Ascending aorta (tissue), 2 donors: ENCODE measurements at regions of chr10 and their contacts with region 1.

Region 1: DNA sequence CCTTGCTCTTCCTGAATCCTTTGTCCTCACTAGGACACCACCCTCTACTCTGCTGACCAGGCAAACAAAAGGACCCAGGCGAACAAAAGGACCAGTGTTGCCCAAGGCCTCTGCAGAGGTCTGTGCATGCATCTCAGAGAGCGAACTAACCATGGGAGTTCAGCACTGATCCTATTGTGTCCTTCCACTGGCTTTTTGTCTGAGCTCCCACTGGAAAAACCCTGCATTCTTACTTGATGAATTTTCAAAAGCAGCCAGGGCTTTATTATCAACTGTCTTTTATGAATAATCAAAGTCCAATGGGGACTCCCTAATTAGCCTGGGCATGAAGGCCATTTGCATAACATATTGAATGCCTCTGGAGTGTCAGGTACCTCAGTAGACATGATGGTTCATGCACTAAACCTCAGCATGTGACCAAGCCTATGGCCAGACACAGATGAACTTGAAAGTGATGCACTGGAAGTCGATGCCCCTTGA is 140.6 kb downstream of the KCNMA1 start:
- DNase-seq: no peak
- H3K4me3 ChIP-seq: no peak overlapping the region
- H3K27ac ChIP-seq: no peak overlapping the region
- H3K4me1 ChIP-seq: peaks cover 9 to 45% of the 10 kb centered on the region in 2 donors
- H3K27me3 ChIP-seq: no peaks in the 10 kb centered on the region
- CTCF ChIP-seq: no peak

Region 2: DNA sequence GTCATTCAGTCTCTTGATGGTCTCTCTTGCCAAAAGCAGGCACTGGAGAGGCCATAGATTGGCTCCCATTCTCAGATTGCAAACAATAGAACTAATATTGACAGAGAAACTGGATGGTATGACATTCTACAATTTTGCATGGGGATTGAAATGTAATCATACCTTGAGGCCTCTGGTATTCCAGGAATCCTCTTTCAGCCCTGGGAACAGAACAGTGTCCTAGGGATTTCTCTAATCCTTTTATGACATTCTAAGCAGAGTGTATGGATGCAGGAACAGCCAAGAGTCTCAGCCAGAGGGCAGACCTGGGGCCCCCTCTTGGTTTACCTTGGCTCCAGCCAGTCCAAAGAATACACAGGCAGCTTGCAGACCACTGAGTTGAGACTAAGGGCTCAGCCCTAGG is 65.8 kb before region 1 on chr10:
- intact Hi-C with region 1: loop called (anchors 5 kb)
- DNase-seq: no peak
- H3K4me3 ChIP-seq: no peak overlapping the region
- H3K27ac ChIP-seq: no peak overlapping the region
- H3K4me1 ChIP-seq: peaks cover 0 to 21% of the 10 kb centered on the region in 2 donors
- H3K27me3 ChIP-seq: no peaks in the 10 kb centered on the region
- CTCF ChIP-seq: no peak

Region 3: DNA sequence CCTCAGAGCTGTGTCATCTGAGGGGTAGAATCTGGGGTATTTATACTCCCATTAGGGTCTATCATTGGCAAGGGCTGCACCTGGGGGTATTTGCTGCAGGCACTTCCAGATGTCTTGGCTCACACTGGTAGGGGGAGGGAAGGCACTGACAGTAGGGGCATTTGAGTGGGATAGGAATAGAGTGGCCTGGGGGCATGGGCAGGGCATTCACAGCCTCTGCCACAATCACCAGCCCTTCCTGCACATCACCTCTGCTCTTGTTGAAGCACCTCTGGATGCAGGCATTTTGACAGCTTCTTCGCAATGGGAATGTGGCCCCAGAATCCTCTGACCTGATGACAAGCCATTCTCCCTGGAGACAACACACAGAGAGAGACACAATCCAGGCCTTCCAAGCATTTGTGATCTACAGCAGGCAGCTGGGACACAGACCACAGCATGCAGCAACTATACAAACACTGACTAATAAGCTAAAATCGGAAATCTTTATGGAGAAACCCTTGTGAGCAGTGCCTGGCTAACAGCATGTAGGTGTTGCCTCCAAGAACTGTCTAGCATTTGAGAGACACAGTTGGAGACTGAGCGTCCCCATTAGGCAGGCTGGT is 37.9 kb before region 1 on chr10:
- intact Hi-C with region 1: no loop called
- DNase-seq: no peak
- H3K4me3 ChIP-seq: no peak overlapping the region
- H3K27ac ChIP-seq: no peak overlapping the region
- H3K4me1 ChIP-seq: peaks cover 9 to 19% of the 10 kb centered on the region in 2 donors
- H3K27me3 ChIP-seq: no peaks in the 10 kb centered on the region
- CTCF ChIP-seq: no peak